SK-N-SH (cell line): ENCODE measurements at regions of chr6 and their contacts with region 1.

Region 1: DNA sequence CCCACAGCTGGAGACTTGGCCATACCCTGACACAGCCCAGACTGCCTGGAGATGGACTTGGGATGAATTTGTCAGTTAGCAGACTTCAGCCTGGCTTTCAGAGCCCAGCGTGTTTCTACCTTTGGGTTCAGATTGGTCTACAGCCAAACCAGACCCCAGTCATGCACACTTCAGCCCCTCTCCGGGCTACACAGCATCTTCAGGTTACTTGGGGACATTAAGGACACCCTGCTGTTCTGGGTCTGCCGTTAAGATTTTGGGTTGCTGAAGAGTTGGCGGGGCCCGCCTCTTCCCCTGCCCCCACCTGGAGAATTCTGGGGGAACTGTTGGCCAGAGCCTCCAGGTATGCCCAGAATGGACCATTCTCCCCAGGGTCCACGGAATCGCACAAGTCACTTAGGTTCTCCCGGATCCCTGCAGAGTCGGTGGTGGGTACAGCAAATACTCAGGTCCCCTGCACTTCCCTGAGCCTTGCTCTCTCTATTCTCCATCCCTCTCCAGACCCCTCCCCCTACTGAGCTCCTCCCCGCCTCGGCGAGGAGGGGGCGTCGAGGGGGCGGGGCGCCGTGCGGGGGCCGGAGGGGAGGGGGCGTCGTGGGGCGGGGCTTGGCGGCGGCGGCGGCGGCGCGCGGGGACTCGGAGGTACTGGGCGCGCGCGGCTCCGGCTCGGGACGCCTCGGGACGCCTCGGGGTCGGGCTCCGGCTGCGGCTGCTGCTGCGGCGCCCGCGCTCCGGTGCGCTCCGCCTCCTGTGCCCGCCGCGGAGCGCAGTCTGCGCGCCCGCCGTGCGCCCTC is at the start of gene PTK7:
- DNase-seq: peak; percentile 98
- H3K4me3 ChIP-seq: peak within 1 kb of the TSS; percentile 81 to 90
- H3K27ac ChIP-seq: peak within 1 kb of the TSS; percentile 71 to 86
- H3K4me1 ChIP-seq: peaks cover 14 to 23% of the 10 kb centered on the region in 2 experiments; a peak in 2 of 4 replicates
- H3K27me3 ChIP-seq: no peaks in the 10 kb centered on the region
- CTCF ChIP-seq: no peak
- EP300 ChIP-seq: no peak
- RAD21 ChIP-seq: no peak
- polyA plus RNA-seq, gene PTK7: 93.7 and 105 TPM in 2 replicates

Region 2: DNA sequence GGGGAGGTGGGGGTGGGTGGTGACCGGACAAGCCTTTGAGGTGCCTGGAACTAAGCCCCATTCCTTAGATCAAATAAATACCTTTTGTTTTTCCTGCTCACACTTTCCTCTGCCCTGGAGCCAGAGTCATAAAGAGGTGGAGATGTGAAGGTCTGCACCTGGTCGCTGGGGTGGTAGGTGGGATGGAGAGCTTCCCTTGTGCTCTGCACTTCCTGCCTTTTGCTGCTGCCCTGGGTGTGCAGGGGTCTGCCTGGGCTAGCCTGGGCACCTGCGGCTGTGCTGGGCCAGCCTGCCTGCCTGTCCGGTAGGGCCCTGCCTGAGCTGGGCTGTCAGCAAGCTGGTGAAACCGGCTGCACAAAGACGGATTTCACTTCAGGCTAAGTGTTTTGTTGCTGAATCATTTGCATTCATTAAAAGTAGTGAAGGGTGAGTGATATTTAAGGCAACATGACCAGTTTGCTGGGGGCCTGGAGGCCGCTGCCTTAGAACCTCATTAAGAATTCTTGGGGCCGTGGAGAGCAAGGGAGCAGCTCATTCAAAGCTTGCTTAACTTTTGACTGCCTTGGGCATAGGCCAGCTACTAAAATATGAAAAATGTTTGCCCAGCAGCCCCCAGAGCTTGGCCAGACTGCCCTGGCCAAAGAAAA is 20.7 kb after region 1 on chr6:
- CTCF ChIA-PET with region 1: interaction called, 12 read pairs
- POLR2A ChIA-PET with region 1: no interaction called
- DNase-seq: peak; percentile 38
- H3K4me3 ChIP-seq: 0 out of 4 replicates have a peak overlapping the region, but pooled peaks of 1 of the 2 experiments have one; percentile 8
- H3K27ac ChIP-seq: peak overlapping the region; percentile 64 to 73
- H3K4me1 ChIP-seq: peaks cover 25 to 48% of the 10 kb centered on the region in 2 experiments
- H3K27me3 ChIP-seq: no peaks in the 10 kb centered on the region
- CTCF ChIP-seq: no peak
- EP300 ChIP-seq: no peak
- RAD21 ChIP-seq: no peak

Region 3: DNA sequence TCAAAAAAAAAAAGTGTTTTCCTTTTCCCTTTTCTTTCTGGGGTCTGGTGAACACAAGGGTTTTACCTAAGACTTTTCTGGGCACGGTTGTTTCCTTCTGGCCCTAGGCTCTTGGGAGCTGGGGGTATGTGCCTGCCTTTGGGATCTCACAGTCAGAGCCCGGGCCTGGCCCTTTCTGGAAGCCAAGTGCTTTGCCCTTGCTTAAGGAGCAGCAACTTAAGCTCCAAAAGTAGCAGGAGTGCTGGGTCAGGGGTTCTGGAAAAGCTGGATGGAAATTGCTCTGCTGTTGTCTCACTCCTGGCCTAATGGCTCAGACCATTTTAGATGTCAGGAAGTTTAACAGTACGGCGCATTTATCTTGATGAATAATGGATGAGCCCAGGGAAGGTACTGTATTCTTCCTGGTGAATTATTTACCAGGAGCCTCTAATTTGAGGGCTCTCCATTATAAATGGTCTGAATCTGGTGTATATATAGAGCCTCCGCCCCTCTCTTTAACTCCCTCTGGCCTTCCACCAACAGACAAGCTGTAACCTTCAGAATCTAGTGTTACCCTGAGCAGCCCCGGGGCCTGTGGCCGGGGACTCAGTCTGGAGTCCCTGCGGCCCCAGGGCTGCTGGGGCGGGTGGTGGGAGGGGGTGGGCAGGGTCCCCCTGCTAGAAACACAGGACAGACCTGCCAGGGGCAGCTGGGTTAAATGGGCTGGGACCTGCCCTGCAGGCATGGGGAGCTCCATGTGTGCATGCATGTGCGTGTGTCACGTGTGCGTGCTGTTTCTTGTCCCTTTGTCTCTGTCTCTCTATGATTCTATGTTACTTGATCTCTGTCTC is 37.8 kb after region 1 on chr6:
- CTCF ChIA-PET with region 1: interaction called, 11 read pairs
- POLR2A ChIA-PET with region 1: interaction called, 21 read pairs
- DNase-seq: peak; percentile 80
- H3K4me3 ChIP-seq: no peak overlapping the region
- H3K27ac ChIP-seq: peak overlapping the region; percentile 76; a peak in 3 of 4 replicates
- H3K4me1 ChIP-seq: peaks cover 18 to 32% of the 10 kb centered on the region in 2 experiments; a peak in 3 of 4 replicates
- H3K27me3 ChIP-seq: no peaks in the 10 kb centered on the region
- CTCF ChIP-seq: no peak
- EP300 ChIP-seq: no peak
- RAD21 ChIP-seq: no peak

Region 4: GRCh38 chr6:43123461-43124314 is 47.8 kb after region 1 on chr6:
- CTCF ChIA-PET with region 1: interaction called, 32 read pairs
- POLR2A ChIA-PET with region 1: interaction called, 11 read pairs
- DNase-seq: peak; percentile 73
- H3K4me3 ChIP-seq: no peak overlapping the region; a peak in 1 of 4 replicates
- H3K27ac ChIP-seq: peak overlapping the region; percentile 91 to 99
- H3K4me1 ChIP-seq: peaks cover 66 to 78% of the 10 kb centered on the region in 2 experiments
- H3K27me3 ChIP-seq: no peaks in the 10 kb centered on the region
- CTCF ChIP-seq: no peak
- EP300 ChIP-seq: no peak; a peak in 2 of 4 replicates
- RAD21 ChIP-seq: no peak